AG04450 (cell line): ENCODE measurements at regions of chr10 and their contacts with region 1.

Region 1: GRCh38 chr10:3467052-3467951 is 294.7 kb upstream of the PITRM1 start:
- DNase-seq: peak; percentile 91
- H3K4me3 ChIP-seq: no peak overlapping the region
- H3K27ac ChIP-seq: peak overlapping the region; percentile 98
- H3K27me3 ChIP-seq: no peaks in the 10 kb centered on the region
- CTCF ChIP-seq: no peak

Region 2: GRCh38 chr10:3452173-3452626 is 15.1 kb before region 1 on chr10:
- CTCF ChIA-PET with region 1: no interaction called
- POLR2A ChIA-PET with region 1: interaction called, 13 read pairs
- DNase-seq: peak; percentile 94
- H3K4me3 ChIP-seq: peak overlapping the region; percentile 27
- H3K27ac ChIP-seq: peak overlapping the region; percentile 97
- H3K27me3 ChIP-seq: no peaks in the 10 kb centered on the region
- CTCF ChIP-seq: peak; percentile 71